K562 (cell line): ENCODE measurements at regions of chr19 and their contacts with region 1.

Region 1: DNA sequence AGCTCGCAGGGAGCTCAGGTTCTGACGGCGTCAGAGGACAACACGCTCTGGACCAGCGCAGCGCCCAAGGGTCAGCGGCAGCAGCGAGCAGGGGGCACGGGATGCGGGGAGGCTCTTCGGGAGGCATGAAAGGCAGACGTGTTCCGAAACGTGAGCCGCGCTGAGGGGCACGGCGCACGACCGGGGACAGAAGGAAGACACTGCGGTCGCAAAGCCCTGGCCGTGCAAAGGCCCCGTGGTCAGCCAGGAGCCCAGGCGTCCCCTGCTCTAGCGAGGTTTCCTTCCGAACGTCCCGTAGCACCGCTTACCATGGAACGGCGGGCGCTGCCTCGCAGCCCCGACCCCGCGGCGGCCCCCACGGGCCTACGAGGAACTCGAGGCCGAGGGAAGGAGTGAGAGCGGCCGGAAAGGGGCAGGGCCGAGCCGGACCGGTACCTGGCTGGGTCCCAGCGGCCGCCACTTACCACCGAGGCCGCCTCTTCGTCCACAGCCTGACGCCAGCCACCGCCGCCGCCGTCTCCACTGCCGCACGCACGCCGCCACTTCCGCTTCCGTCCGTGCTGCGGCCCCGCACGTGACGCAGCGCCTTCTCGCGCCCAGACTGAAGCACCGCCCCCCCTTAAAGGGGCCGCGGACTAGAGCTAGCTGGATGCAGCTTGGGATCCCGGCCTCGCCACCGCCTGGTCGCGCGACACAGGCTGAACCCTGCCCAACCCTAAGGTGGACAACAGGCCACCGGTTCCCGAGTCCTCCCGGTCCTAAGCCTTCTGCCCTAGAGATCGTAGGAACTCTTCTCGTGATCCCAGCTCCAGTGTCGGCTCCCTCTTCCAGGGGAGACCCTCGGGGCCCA is 9.4 kb downstream of the ABHD17A start:
- DNase-seq: peak; percentile 77 to 97 (median 84)
- ATAC-seq: peak; percentile 88
- H3K4me3 ChIP-seq: peak overlapping the region; percentile 100
- H3K27ac ChIP-seq: peak overlapping the region; percentile 94
- H3K4me1 ChIP-seq: peaks cover 37 to 56% of the 10 kb centered on the region in 2 experiments
- H3K27me3 ChIP-seq: no peaks in the 10 kb centered on the region
- CTCF ChIP-seq: peak in 1 of 3 experiments; percentile 49; a peak in 1 of 6 replicates
- EP300 ChIP-seq: no peak
- POLR2A ChIP-seq: peak; percentile 91
- RAD21 ChIP-seq: no peak; a peak in 2 of 4 replicates

Region 2: GRCh38 chr19:1863726-1864480 is 12.0 kb before region 1 on chr19:
- CTCF ChIA-PET with region 1: no interaction called
- POLR2A ChIA-PET with region 1: interaction called, 24 read pairs
- in situ Hi-C with region 1: no loop called
- intact Hi-C with region 1: no loop called
- DNase-seq: peak; percentile 84 to 95 (median 89)
- ATAC-seq: peak; percentile 72
- H3K4me3 ChIP-seq: peak overlapping the region; percentile 75
- H3K27ac ChIP-seq: peak overlapping the region; percentile 99
- H3K4me1 ChIP-seq: peaks cover 34 to 77% of the 10 kb centered on the region in 2 experiments
- H3K27me3 ChIP-seq: no peaks in the 10 kb centered on the region
- CTCF ChIP-seq: no peak; a peak in 1 of 6 replicates
- EP300 ChIP-seq: no peak
- POLR2A ChIP-seq: peak; percentile 62; the same call in 1 of the 2 replicates
- RAD21 ChIP-seq: no peak

Region 3: GRCh38 chr19:1896508-1896907 is 20.6 kb after region 1 on chr19:
- CTCF ChIA-PET with region 1: no interaction called
- POLR2A ChIA-PET with region 1: interaction called, 6 read pairs
- in situ Hi-C with region 1: no loop called
- intact Hi-C with region 1: loop called (anchors 2 kb)
- DNase-seq: peak in 1 of 4 experiments; percentile 36
- ATAC-seq: no peak
- H3K4me3 ChIP-seq: no peak overlapping the region
- H3K27ac ChIP-seq: peak overlapping the region; percentile 36
- H3K4me1 ChIP-seq: peaks cover 9 to 38% of the 10 kb centered on the region in 2 experiments; a peak in 4 of 5 replicates
- H3K27me3 ChIP-seq: no peaks in the 10 kb centered on the region
- CTCF ChIP-seq: no peak
- EP300 ChIP-seq: no peak
- POLR2A ChIP-seq: no peak
- RAD21 ChIP-seq: no peak